ENCODE measurements at regions of chr9 and their contacts with region 1.

Region 1: GRCh38 chr9:81826517-81826906 is 101.7 kb upstream of the SPATA31D4 start:
- DNase-seq: peak; percentile 88
- ATAC-seq: peak; percentile 96

Region 2: GRCh38 chr9:81689343-81690190 is 136.9 kb before region 1 on chr9 and contains the start of gene TLE1:
- intact Hi-C with region 1: loop called (anchors 10 kb)
- DNase-seq: peak; percentile 99
- ATAC-seq: peak; percentile 93
- total RNA-seq, gene TLE1: 9.7 TPM

Region 3: GRCh38 chr9:82052081-82052480 is 225.6 kb after region 1 on chr9:
- intact Hi-C with region 1: no loop called
- DNase-seq: no peak
- ATAC-seq: no peak

Measured in Right ventricle myocardium superior (tissue), 1 donor.